Right ventricle myocardium superior (tissue), 1 donor: ENCODE measurements at regions of chr17 and their contacts with region 1.

Region 1: DNA sequence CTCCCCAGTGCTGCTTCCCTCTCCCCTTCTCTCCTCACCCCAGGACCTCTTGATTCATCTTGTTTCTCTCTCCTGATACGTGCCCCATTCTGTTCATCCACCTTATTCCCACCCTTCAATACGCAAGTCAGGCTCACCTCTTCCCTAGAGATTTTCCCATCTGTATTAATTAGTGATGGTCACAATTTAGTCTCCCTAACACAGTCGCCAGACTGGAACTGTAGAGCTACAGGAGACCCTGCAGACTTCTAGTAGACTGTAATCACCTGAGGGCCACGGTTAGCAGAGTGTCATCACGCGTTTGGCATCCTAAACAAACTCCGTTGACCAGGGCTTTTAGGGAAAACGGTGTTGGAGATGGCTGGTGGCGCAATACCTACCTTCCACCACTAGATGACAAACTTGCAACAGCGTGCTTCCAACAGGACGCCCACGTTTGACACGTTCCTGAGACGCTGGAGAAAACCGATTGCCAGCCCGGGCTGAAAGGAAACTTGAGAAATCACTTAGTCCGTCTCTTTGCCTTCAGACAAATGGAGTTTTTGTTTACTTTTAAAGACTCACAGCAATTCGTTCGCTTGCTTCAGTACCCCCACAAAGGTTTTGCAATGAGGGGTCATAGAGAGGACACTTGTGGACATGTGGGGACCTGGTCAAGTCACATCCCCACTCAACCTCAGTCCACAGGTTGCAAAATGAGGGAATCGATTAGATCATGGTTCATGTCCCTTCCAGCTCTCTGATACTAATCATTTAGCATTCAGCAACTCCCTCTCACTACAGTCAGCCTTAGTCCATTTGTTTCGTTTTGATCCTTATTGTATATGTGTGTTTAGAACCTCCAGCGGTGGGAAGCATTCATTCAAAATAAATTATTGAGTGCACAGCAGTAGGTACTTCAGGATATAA is 20.6 kb downstream of the MYL4 start:
- DNase-seq: peak; percentile 83
- ATAC-seq: peak; percentile 90

Region 2: GRCh38 chr17:47315451-47316266 is 85.9 kb after region 1 on chr17:
- intact Hi-C with region 1: loop called (anchors 2 kb)
- DNase-seq: no peak
- ATAC-seq: peak; percentile 86